Posterior cingulate gyrus (tissue), 11 donors: ENCODE measurements at regions of chr14 and their contacts with region 1.

Region 1: GRCh38 chr14:81170104-81170828 is 50.5 kb downstream of the GTF2A1 start:
- DNase-seq: peak; percentile 94 to 99 (median 96)

Region 2: GRCh38 chr14:80954687-80955299 is 215.5 kb before region 1 on chr14:
- intact Hi-C with region 1: loop called (anchors 5 kb)
- DNase-seq: peak; percentile 57 to 95 (median 82)

Region 3: DNA sequence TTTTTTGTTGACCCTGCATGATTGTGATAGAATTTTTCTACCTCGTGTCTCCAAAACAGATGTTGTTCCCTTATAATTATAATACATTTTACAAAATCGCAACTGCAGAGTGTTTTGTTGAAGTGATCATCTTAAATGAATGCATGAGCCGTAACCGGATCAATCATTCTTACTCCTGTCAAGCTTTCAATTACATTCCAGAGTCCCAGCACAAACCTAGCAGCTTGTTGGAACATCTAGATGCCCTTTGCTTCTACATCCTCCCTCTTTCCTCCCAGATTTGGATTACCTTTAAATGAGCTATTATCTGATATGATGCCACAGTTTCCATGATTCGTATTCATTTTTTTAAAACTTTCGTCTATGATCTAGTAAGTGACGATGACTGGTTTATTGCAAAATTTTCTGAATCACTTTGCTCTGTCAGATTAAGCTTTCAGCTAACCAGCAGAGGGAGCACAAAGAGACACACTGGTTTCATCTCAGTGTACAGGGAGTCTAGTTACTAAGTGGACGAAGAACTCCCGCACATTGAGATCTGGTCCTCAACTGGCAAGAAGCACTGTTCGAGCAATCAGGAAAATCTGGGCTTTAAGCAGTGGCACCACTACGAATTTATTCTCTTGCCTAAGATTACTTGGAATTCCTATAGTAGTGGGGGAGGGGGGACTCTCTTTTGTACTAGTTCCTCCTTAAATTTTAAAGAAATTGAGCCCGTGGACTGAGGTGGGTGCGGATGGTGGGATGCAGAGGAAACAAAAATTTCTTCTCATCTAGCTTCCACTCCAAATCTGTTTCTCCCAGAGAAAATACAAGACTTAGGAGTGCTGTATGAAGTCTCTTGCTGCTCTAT is 174.0 kb before region 1 on chr14:
- intact Hi-C with region 1: loop called (anchors 1 kb)
- DNase-seq: peak in 3 of 10 donors; percentile 17 to 37 (median 19)

Region 4: DNA sequence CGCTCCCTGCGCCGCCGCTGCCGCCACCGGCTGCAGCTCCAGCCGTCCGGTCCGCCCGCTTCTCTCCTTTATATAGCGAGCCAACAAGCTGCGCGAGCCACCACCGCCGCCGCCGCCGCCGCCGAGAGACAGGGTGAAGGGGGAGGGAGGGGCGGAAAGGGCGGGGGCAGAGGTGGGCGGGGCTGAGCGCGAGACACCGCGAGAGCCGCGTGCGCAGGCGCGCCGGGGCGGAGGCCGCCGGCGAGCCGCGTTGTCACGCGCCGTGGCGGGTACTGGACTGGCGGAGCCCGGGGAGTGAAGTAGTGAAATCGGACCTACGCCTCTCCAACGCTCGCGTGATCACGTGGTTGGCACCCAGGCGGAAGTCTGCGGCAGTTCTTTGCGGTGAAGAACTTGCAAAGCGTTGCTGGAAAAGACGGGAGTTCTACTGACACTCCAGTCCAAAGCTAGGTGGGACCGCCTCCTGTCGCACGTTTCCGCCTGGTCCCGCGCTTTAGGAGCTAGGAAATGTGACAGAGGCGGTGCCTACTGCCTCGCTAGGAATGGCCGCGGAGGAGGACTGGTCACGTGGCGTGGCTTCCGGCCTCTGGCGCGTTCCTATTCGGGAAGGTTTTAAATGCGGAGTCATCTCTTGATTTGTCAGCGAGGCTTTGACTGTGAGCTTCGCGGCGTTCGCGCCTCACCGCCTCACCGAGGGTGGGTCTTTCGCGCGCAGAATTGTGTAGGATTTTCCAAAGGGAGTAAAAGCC is 50.7 kb after region 1 on chr14 and contains the start of gene GTF2A1:
- intact Hi-C with region 1: loop called (anchors 5 kb)
- DNase-seq: peak; percentile 89 to 99 (median 94)